ENCODE measurements at regions of chr2 and their contacts with region 1.

Region 1: GRCh38 chr2:112645310-112646101 is at the start of gene SLC20A1:
- DNase-seq: peak; percentile 92 to 99 (median 97)
- ATAC-seq: peak; percentile 92 to 96 (median 92)
- H3K4me3 ChIP-seq: peak within 1 kb of the TSS; percentile 75 to 90
- H3K4me3 Mint-ChIP-seq: peak within 1 kb of the TSS; percentile 85 to 92 (median 88)
- H3K27ac ChIP-seq: peak within 1 kb of the TSS; percentile 75
- H3K27ac Mint-ChIP-seq: peak within 1 kb of the TSS; percentile 86 to 91
- H3K4me1 ChIP-seq: peaks cover 25 to 31% of the 10 kb centered on the region in 2 experiments
- H3K4me1 Mint-ChIP-seq: peaks cover 51 to 59% (median 52%) of the 10 kb centered on the region in 3 donors
- H3K27me3 ChIP-seq: no peaks in the 10 kb centered on the region
- H3K27me3 Mint-ChIP-seq: no peaks in the 10 kb centered on the region
- total RNA-seq, gene SLC20A1: 65.8 to 135 (median 83.0) TPM

Region 2: DNA sequence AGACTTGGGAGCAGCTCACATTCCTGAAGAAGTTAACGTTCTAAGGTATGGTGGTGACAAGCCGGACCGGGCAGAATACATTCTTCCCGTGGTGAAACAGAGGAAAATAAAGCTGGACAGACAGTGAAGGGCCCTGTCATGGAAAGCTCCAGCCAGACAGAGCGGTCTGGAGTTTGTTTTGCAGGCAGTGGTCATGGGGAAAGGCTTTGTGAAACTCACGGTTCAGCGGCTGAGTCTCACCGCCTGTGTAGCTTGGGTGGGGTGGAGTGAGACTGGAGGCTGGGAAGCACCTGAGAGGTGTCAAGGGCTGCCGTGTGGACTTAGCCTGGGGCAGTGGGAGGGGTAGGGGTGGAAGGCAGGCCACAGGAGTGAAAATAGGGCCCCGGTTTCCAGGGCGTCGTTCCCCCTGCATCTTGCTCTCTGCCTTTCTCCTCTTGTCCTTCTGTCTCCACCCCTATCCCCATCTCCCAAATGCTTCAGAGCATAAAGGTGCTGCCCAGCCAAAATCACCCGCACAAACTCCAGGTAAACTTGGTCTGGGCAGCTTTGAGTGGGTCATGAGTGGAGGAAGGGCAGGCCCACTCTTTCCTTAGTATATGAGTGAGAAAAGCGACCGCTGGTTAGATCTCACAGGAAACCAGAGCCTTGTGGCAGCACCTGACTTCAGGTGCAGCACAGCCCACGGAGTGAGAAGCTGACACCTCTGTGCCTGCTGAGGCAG is 11.2 kb before region 1 on chr2:
- CTCF ChIA-PET with region 1: interaction called, 4 to 26 read pairs
- POLR2A ChIA-PET with region 1: interaction called, 5 to 6 read pairs
- DNase-seq: peak in 23 of 35 experiments; percentile 9 to 58 (median 28)
- ATAC-seq: peak; percentile 36 to 52 (median 39)
- H3K4me3 ChIP-seq: no peak overlapping the region
- H3K4me3 Mint-ChIP-seq: peak overlapping the region; percentile 2 to 68 (median 13)
- H3K27ac ChIP-seq: peak overlapping the region; percentile 56
- H3K27ac Mint-ChIP-seq: peak overlapping the region; percentile 93
- H3K4me1 ChIP-seq: peaks cover 50 to 77% of the 10 kb centered on the region in 2 experiments
- H3K4me1 Mint-ChIP-seq: peaks cover 74 to 77% (median 77%) of the 10 kb centered on the region in 3 donors
- H3K27me3 ChIP-seq: no peaks in the 10 kb centered on the region
- H3K27me3 Mint-ChIP-seq: no peaks in the 10 kb centered on the region

Measured in T-cell (primary cell).